Naive thymus-derived CD4-positive, alpha-beta T cell (primary cell): ENCODE measurements at regions of chr1 and their contacts with region 1.

Region 1: GRCh38 chr1:28470146-28470545 is 35.7 kb upstream of the RCC1 start:
- DNase-seq: no peak
- ATAC-seq: no peak
- H3K4me3 ChIP-seq: no peak overlapping the region
- H3K4me3 Mint-ChIP-seq: no peak overlapping the region
- H3K27ac ChIP-seq: no peak overlapping the region
- H3K27ac Mint-ChIP-seq: no peak overlapping the region
- H3K4me1 ChIP-seq: no peaks in the 10 kb centered on the region
- H3K4me1 Mint-ChIP-seq: peaks cover 0 to 13% (median 0%) of the 10 kb centered on the region in 7 donors
- H3K27me3 ChIP-seq: no peaks in the 10 kb centered on the region
- H3K27me3 Mint-ChIP-seq: no peaks in the 10 kb centered on the region

Region 2: DNA sequence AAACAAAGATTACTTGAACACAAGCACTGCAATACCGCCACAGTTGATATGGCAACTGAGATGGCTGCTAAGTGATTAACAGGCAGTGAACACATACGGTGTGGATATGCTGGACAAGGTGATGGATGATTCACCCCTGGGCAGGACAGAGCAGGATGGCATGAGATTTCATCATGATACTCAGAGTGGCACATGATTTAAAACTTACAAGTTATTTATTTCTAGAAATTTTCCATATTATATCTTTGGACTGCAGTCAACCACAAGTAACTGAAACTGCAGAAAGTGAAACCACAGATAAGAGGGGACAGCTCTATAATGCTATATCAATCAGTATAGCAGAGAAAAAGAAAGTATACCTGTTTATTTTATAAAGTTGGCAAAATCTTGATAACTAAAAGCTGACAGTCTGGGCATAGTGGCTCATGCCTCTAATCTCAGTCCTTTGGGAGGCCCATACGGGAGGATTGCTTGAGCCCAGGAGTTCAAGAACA is 52.7 kb before region 1 on chr1:
- CTCF ChIA-PET with region 1: no interaction called
- POLR2A ChIA-PET with region 1: no interaction called
- intact Hi-C with region 1: loop called in 1 of 2 experiments (anchors 10 kb)
- DNase-seq: no peak
- ATAC-seq: peak; percentile 74
- H3K4me3 ChIP-seq: no peak overlapping the region
- H3K4me3 Mint-ChIP-seq: peak overlapping the region in 6 of 10 donors; percentile 24 to 60 (median 54)
- H3K27ac ChIP-seq: no peak overlapping the region
- H3K27ac Mint-ChIP-seq: peak overlapping the region in 4 of 9 donors; percentile 32 to 42 (median 36)
- H3K4me1 ChIP-seq: peaks cover 0 to 5% of the 10 kb centered on the region in 2 donors
- H3K4me1 Mint-ChIP-seq: peaks cover 6 to 18% (median 16%) of the 10 kb centered on the region in 7 donors
- H3K27me3 ChIP-seq: no peaks in the 10 kb centered on the region
- H3K27me3 Mint-ChIP-seq: no peaks in the 10 kb centered on the region